ENCODE measurements at regions of chr17 and their contacts with region 1.

Region 1: GRCh38 chr17:47949136-47949759 is 7.9 kb downstream of the PNPO start:
- DNase-seq: peak; percentile 82
- ATAC-seq: peak; percentile 96
- H3K4me3 ChIP-seq: peak overlapping the region; percentile 16
- H3K27ac ChIP-seq: peak overlapping the region; percentile 64
- H3K4me1 ChIP-seq: peaks cover 3% of the 10 kb centered on the region
- H3K27me3 ChIP-seq: no peaks in the 10 kb centered on the region
- CTCF ChIP-seq: peak; percentile 94
- POLR2A ChIP-seq: peak; percentile 36; the same call in 1 of the 2 replicates
- RAD21 ChIP-seq: peak; percentile 86

Region 2: DNA sequence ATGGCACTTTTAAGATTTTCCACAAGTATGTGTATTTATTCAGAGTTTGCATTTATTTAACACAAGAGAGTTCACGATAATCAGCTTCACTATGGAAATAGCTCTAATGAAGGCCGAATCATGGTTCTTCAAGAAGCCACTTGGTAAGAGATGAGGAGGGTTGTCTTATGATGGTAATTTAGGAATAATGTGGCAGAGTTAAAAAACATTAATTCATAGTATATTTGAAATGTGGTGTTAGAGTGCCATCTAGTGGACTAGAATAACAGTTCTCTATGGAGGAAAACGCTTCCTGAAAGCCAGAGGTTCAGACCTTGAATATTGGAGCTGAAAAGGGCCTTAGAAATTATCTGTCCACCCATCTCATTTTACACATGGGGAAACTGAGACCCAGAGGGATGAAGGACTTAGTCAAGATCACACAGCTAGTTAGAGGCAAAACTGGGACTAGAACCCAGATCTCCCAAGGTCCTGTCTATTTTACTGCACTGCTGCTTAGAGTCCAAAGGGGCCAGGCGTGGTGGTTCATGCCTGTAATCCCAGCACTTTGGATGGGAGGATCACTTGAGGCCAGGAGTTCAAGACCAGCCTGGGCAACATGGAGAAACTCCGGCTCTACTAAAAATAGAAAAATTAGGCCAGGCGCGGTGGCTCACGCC is 333.4 kb before region 1 on chr17:
- CTCF ChIA-PET with region 1: no interaction called
- POLR2A ChIA-PET with region 1: no interaction called
- dilution Hi-C with region 1: no loop called
- in situ Hi-C with region 1: no loop called
- intact Hi-C with region 1: no loop called
- DNase-seq: peak; percentile 62
- ATAC-seq: peak; percentile 58
- H3K4me3 ChIP-seq: no peak overlapping the region
- H3K27ac ChIP-seq: no peak overlapping the region; the same call in 1 of the 2 replicates
- H3K4me1 ChIP-seq: peaks cover 11% of the 10 kb centered on the region
- H3K27me3 ChIP-seq: no peaks in the 10 kb centered on the region
- CTCF ChIP-seq: peak; percentile 71
- POLR2A ChIP-seq: no peak
- RAD21 ChIP-seq: peak; percentile 61

Region 3: GRCh38 chr17:47929218-47930000 is 19.8 kb before region 1 on chr17:
- CTCF ChIA-PET with region 1: no interaction called
- POLR2A ChIA-PET with region 1: no interaction called
- dilution Hi-C with region 1: no loop called
- in situ Hi-C with region 1: no loop called
- intact Hi-C with region 1: no loop called
- DNase-seq: no peak
- ATAC-seq: no peak
- H3K4me3 ChIP-seq: no peak overlapping the region
- H3K27ac ChIP-seq: no peak overlapping the region
- H3K4me1 ChIP-seq: no peaks in the 10 kb centered on the region
- H3K27me3 ChIP-seq: no peaks in the 10 kb centered on the region
- CTCF ChIP-seq: no peak
- POLR2A ChIP-seq: no peak
- RAD21 ChIP-seq: no peak

Region 4: GRCh38 chr17:47970704-47971463 is 21.6 kb after region 1 on chr17 and contains the start of gene CDK5RAP3:
- CTCF ChIA-PET with region 1: interaction called, 15 read pairs
- POLR2A ChIA-PET with region 1: no interaction called
- dilution Hi-C with region 1: no loop called
- in situ Hi-C with region 1: no loop called
- intact Hi-C with region 1: loop called (anchors 1 kb)
- DNase-seq: peak; percentile 99
- ATAC-seq: peak; percentile 98
- H3K4me3 ChIP-seq: peak within 1 kb of the TSS; percentile 82
- H3K27ac ChIP-seq: peak within 1 kb of the TSS; percentile 73
- H3K4me1 ChIP-seq: peaks cover 17% of the 10 kb centered on the region
- H3K27me3 ChIP-seq: no peaks in the 10 kb centered on the region
- CTCF ChIP-seq: peak; percentile 99
- POLR2A ChIP-seq: peak; percentile 87; the same call in 1 of the 2 replicates
- RAD21 ChIP-seq: peak; percentile 74
- total RNA-seq, gene CDK5RAP3: 56.7 and 75.3 TPM in 2 replicates